A673 (cell line): ENCODE measurements at regions of chr5 and their contacts with region 1.

Region 1: DNA sequence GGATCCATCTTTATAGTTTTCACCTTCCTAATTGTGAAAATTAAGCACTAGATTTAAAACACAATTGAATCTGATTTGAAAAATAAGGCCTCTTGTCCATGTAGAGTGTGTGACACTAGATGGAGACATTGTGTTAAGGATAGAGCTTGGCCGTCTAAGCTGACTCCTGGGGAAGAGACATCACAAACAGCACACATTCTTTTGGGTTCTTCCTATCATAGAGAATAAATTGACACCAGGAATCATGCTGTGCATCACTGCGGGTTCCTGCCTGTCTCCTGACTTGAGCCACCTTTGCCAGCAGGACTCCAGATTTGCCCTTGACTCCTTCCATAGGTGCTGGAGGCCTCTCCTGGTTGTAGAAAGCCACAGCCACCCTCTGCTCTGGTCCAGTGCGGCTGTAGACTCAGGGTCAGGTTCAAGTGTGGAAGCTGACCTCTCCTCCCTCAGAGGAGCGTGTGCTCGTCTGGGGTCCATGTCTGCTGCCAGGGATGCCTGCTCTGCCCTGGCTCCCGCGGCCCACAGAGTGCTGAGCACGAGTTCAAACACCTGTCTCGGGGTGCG is 11.2 kb downstream of the ROPN1L start:
- DNase-seq: peak; percentile 78
- H3K4me3 ChIP-seq: no peak overlapping the region
- H3K27ac ChIP-seq: no peak overlapping the region
- H3K4me1 ChIP-seq: no peaks in the 10 kb centered on the region
- H3K27me3 ChIP-seq: no peaks in the 10 kb centered on the region
- CTCF ChIP-seq: peak; percentile 76

Region 2: DNA sequence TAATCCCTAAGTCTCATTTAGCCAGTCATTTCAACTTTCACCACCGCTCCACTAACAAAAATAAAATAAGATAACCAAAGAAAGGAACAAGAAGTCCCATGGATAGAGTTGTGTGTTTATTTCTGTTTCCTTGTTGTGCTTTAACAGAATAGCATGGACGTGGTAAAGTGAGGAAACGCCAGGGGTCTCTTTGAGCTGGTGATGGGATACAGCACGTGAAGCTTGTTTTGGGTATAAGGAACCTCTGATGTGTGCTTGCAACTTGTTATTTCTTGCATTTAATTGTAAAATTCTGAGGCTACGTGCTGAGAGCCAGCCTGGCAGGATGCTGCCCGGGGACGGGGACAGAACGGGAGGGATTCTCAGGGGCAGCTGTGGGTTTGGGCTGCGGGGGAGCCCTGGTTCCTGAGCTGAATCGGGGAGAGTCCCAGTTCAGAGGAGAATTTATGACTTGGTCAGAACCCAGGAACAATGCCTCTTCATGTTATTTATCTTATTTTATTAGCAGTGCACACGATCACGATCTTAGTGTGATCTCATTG is 174.4 kb after region 1 on chr5:
- CTCF ChIA-PET with region 1: interaction called, 29 read pairs
- POLR2A ChIA-PET with region 1: no interaction called
- intact Hi-C with region 1: loop called (anchors 1 kb)
- DNase-seq: no peak
- H3K4me3 ChIP-seq: peak overlapping the region; percentile 34
- H3K27ac ChIP-seq: no peak overlapping the region
- H3K4me1 ChIP-seq: peaks cover 6% of the 10 kb centered on the region
- H3K27me3 ChIP-seq: no peaks in the 10 kb centered on the region
- CTCF ChIP-seq: no peak